Activated CD4-positive, alpha-beta memory T cell treated with anti-CD3 and anti-CD28 coated beads for 36 hours (primary cell): ENCODE measurements at regions of chr3 and their contacts with region 1.

Region 1: GRCh38 chr3:38496131-38496910 is at the start of gene EXOG:
- DNase-seq: peak; percentile 97
- H3K4me3 Mint-ChIP-seq: peak within 1 kb of the TSS; percentile 97
- H3K27ac Mint-ChIP-seq: peak within 1 kb of the TSS; percentile 91
- H3K4me1 Mint-ChIP-seq: peaks cover 19% of the 10 kb centered on the region
- H3K27me3 Mint-ChIP-seq: no peaks in the 10 kb centered on the region
- total RNA-seq, gene EXOG: 11.7 to 13.0 TPM

Region 2: GRCh38 chr3:38039101-38039898 is 457.0 kb before region 1 on chr3 and contains the start of gene DLEC1:
- CTCF ChIA-PET with region 1: interaction called, 3 read pairs
- POLR2A ChIA-PET with region 1: no interaction called
- intact Hi-C with region 1: loop called (anchors 5 kb)
- DNase-seq: peak; percentile 92
- H3K4me3 Mint-ChIP-seq: peak within 1 kb of the TSS; percentile 48
- H3K27ac Mint-ChIP-seq: peak within 1 kb of the TSS; percentile 93
- H3K4me1 Mint-ChIP-seq: peaks cover 33% of the 10 kb centered on the region
- H3K27me3 Mint-ChIP-seq: no peaks in the 10 kb centered on the region
- total RNA-seq, gene DLEC1: 0.70 to 1.1 TPM

Region 3: DNA sequence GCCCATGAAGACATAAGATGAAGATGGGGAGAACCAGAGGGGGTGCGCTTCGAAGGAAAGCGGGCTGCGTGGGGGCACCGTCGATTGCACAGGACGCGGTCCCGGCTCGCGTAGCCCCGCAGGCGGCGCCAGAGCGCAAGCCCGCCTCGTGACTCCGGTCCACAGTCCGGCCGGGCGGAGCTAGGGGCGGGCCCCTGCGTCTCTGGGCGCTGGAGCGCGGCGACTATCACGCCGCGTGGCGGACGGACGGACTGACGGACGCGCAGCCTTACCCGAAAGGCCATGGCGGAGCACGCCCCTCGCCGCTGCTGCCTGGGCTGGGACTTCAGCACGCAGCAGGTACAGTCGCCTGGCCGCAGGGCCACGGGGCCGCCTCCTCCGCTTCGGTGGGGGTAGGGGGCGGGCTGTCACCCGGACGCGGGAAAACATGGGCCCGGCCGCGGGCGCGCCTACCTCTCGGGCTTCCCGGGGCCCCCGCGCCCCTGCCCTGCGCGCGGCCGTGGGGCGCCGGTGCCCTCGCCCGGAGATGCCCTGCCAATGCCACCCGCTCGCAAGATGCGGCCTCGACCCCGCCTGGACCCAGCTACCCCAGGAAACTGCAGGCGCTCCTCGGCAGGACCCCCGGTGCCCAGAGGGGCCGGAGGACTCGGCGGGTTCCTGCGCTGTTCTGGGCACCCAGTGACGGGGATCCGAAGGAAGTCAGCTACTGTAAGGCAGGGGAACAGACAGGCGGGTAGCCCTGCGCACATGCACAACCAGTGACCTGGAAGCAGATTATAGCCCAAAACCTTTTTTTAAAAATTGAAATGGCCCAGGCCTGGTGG is 149.5 kb before region 1 on chr3 and contains the start of gene XYLB:
- CTCF ChIA-PET with region 1: interaction called, 14 read pairs
- POLR2A ChIA-PET with region 1: no interaction called
- intact Hi-C with region 1: loop called (anchors 5 kb)
- DNase-seq: peak; percentile 84
- H3K4me3 Mint-ChIP-seq: peak within 1 kb of the TSS; percentile 71
- H3K27ac Mint-ChIP-seq: no peak within 1 kb of the TSS
- H3K4me1 Mint-ChIP-seq: peaks cover 6% of the 10 kb centered on the region
- H3K27me3 Mint-ChIP-seq: no peaks in the 10 kb centered on the region
- total RNA-seq, gene XYLB: 4.8 to 4.9 TPM

Region 4: GRCh38 chr3:38479431-38480092 is 16.8 kb before region 1 on chr3:
- CTCF ChIA-PET with region 1: interaction called, 13 read pairs
- POLR2A ChIA-PET with region 1: no interaction called
- intact Hi-C with region 1: no loop called
- DNase-seq: peak; percentile 58
- H3K4me3 Mint-ChIP-seq: no peak overlapping the region
- H3K27ac Mint-ChIP-seq: no peak overlapping the region
- H3K4me1 Mint-ChIP-seq: no peaks in the 10 kb centered on the region
- H3K27me3 Mint-ChIP-seq: no peaks in the 10 kb centered on the region

Region 5: GRCh38 chr3:38521391-38521987 is 25.2 kb after region 1 on chr3:
- CTCF ChIA-PET with region 1: interaction called, 34 read pairs
- POLR2A ChIA-PET with region 1: no interaction called
- intact Hi-C with region 1: loop called (anchors 1 kb)
- DNase-seq: peak; percentile 72
- H3K4me3 Mint-ChIP-seq: no peak overlapping the region
- H3K27ac Mint-ChIP-seq: no peak overlapping the region
- H3K4me1 Mint-ChIP-seq: peaks cover 30% of the 10 kb centered on the region
- H3K27me3 Mint-ChIP-seq: no peaks in the 10 kb centered on the region

Region 6: DNA sequence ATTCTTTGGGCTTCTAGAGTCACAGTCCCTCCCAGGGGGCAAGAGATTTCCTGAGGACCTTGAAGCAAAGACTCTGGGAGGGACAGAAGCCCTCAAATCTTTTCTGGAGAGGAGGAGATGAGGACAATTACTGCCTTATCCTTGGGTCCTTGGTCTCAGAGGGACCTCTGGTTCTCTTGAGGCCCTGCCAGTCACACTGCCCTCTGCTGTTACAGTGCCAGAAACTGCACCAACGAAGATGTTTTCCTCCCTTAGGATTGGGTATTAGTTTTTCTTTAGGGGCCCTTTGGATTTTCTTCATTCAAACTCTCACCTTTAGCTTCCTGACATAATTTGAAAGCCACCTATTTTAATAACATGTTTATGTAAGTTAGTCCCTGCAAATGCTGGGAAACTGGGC is 211.4 kb after region 1 on chr3:
- CTCF ChIA-PET with region 1: no interaction called
- POLR2A ChIA-PET with region 1: no interaction called
- intact Hi-C with region 1: no loop called
- DNase-seq: no peak
- H3K4me3 Mint-ChIP-seq: no peak overlapping the region
- H3K27ac Mint-ChIP-seq: no peak overlapping the region
- H3K4me1 Mint-ChIP-seq: no peaks in the 10 kb centered on the region
- H3K27me3 Mint-ChIP-seq: peaks cover 13% of the 10 kb centered on the region

Region 7: DNA sequence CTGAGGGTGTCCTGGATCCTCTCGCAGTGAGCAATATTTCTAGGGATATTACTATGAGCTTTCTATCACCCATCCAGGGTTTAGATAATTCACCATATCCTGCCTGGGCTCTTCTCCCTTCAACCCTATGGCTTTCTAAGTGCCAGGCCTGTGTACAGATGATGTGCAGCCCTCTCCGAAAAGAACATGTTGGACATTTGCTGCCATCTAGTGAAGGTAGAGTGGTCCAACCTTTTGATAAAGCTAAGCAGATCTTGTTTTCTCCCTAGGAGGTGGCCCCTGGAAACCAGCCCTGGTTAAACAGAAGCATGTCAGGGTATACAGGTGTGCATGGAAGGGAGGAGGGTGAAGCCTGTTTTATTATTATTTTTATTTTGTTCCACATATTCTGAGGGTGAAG is 347.6 kb after region 1 on chr3:
- CTCF ChIA-PET with region 1: no interaction called
- POLR2A ChIA-PET with region 1: no interaction called
- intact Hi-C with region 1: loop called (anchors 1 kb)
- DNase-seq: no peak
- H3K4me3 Mint-ChIP-seq: no peak overlapping the region
- H3K27ac Mint-ChIP-seq: no peak overlapping the region
- H3K4me1 Mint-ChIP-seq: no peaks in the 10 kb centered on the region
- H3K27me3 Mint-ChIP-seq: peaks cover 3% of the 10 kb centered on the region